ENCODE measurements at regions of chr2 and their contacts with region 1.

Region 1: GRCh38 chr2:69306822-69307578 is 80.0 kb downstream of the GFPT1 start:
- DNase-seq: peak; percentile 55

Region 2: DNA sequence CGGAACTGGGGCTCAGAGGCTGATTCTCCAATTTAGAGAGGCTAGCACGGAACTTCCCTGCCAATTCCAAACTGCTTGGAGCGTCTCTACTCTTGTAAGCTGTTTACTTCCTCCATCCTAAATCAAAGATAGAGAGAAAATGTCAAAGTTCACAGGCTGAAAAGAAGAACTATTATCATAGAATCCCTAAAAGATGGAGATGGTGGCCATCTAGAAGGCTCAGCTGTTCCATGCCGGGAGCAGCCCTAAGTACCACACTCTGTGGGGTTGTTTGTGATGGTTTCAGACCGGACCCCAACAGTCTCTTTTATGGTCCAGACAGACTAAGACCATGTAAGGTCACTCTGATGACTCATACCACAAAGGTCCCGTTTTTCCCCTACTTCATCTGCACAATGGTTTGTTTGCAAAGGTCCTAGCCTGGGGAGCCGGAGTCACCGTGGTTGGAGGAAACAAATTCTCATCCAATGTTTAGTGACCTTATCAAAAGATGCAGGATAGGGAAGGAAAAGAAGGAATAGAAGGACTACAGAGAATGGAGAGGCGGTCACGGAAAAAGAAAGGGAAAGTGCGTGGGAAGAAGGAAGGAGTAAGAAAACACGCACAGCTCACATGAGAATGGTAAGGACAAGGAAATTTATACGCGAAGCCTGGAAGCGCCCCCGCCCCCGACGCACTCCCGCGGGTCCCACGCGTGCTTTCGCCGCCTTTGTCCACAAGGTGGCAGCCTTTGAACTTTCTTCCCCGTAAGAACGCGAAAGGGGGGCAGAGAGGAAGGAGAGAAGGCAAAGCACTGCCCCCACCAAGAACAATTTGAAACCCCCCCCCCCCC is 294.5 kb before region 1 on chr2:
- in situ Hi-C with region 1: loop called (anchors 25 kb)
- DNase-seq: peak; percentile 38

Region 3: GRCh38 chr2:69345434-69345833 is 38.4 kb after region 1 on chr2:
- in situ Hi-C with region 1: no loop called
- DNase-seq: no peak

Region 4: GRCh38 chr2:69356471-69356870 is 49.5 kb after region 1 on chr2:
- in situ Hi-C with region 1: no loop called
- DNase-seq: no peak